Transverse colon (tissue), 4 donors: ENCODE measurements at regions of chr19 and their contacts with region 1.

Region 1: GRCh38 chr19:10565567-10566407 is at the start of gene KRI1:
- DNase-seq: peak; percentile 99
- H3K4me3 ChIP-seq: peak within 1 kb of the TSS; percentile 56 to 97 (median 78)
- H3K27ac ChIP-seq: peak within 1 kb of the TSS; percentile 88 to 96 (median 90)
- H3K4me1 ChIP-seq: peaks cover 26 to 42% (median 35%) of the 10 kb centered on the region in 4 donors
- H3K27me3 ChIP-seq: no peaks in the 10 kb centered on the region
- CTCF ChIP-seq: peak in 4 of 5 experiments; percentile 37 to 85 (median 48)
- EP300 ChIP-seq: peak; percentile 85
- POLR2A ChIP-seq: peak; percentile 76
- total RNA-seq, gene KRI1: 12.7 to 53.1 (median 27.9) TPM

Region 2: GRCh38 chr19:10502524-10503001 is 63.2 kb before region 1 on chr19:
- in situ Hi-C with region 1: no loop called
- intact Hi-C with region 1: loop called (anchors 10 kb)
- DNase-seq: peak; percentile 95
- H3K4me3 ChIP-seq: peak overlapping the region; percentile 77 to 100 (median 94)
- H3K27ac ChIP-seq: peak overlapping the region; percentile 98 to 100 (median 98)
- H3K4me1 ChIP-seq: peaks cover 20 to 50% (median 35%) of the 10 kb centered on the region in 4 donors
- H3K27me3 ChIP-seq: no peaks in the 10 kb centered on the region
- CTCF ChIP-seq: no peak
- EP300 ChIP-seq: peak; percentile 30
- POLR2A ChIP-seq: peak; percentile 51

Region 3: DNA sequence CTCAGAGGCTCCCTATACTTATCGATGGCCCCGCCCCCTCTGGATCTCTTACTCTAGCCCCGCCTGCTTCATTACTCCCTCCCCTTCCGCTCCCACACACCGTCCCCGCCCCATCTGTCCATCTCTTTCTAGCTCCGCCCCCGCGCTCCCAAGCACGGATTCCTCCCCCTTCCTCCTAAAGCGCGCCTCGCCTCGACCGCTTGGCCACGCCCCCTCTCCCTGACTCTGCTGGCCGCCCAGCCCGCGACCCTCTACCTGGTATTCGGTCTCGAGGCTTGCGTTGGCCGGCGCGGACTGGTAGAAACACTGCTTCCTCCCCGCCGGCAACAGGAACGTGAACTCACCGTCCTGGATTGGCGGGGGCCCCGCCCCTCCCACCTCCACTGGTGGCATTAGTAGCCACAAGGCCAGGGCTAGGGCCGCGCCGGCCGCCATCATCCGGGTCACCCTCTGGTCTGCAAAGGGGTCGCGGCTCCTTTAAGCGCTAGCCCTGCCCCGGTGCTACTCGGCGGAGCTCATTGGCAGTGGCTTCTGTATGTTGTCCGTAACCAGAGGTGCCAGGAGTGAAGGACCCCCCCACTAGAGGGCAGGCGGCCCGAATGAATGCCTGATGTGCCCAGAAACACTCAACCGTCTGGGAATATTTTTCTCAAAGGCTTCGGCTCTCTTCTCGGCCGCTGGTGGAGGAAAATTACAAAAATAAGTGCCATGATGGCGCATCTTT is 270.1 kb after region 1 on chr19 and contains the start of gene TMED1:
- in situ Hi-C with region 1: no loop called
- intact Hi-C with region 1: loop called (anchors 2 kb)
- DNase-seq: peak; percentile 100
- H3K4me3 ChIP-seq: peak within 1 kb of the TSS; percentile 56 to 66 (median 60)
- H3K27ac ChIP-seq: peak within 1 kb of the TSS; percentile 93 to 99 (median 98)
- H3K4me1 ChIP-seq: peaks cover 0 to 7% (median 5%) of the 10 kb centered on the region in 4 donors
- H3K27me3 ChIP-seq: no peaks in the 10 kb centered on the region
- CTCF ChIP-seq: peak; percentile 34 to 88 (median 50)
- EP300 ChIP-seq: no peak
- POLR2A ChIP-seq: peak; percentile 75
- total RNA-seq, gene TMED1: 2.8 to 40.4 (median 24.4) TPM